ENCODE measurements at regions of chr10 and their contacts with region 1.

Region 1: GRCh38 chr10:24415455-24416125 is 206.7 kb downstream of the KIAA1217 start:
- DNase-seq: no peak
- ATAC-seq: no peak
- H3K4me3 ChIP-seq: no peak overlapping the region
- H3K27ac ChIP-seq: no peak overlapping the region
- H3K4me1 ChIP-seq: no peaks in the 10 kb centered on the region
- H3K27me3 ChIP-seq: no peaks in the 10 kb centered on the region
- CTCF ChIP-seq: no peak
- EP300 ChIP-seq: no peak
- POLR2A ChIP-seq: no peak
- RAD21 ChIP-seq: no peak

Region 2: GRCh38 chr10:24331457-24331856 is 84.1 kb before region 1 on chr10:
- CTCF ChIA-PET with region 1: no interaction called
- POLR2A ChIA-PET with region 1: interaction called, 10 read pairs
- RAD21 ChIA-PET with region 1: no interaction called
- SMC1A ChIA-PET with region 1: no interaction called
- in situ Hi-C with region 1: no loop called
- intact Hi-C with region 1: no loop called
- DNase-seq: no peak
- ATAC-seq: no peak
- H3K4me3 ChIP-seq: no peak overlapping the region
- H3K27ac ChIP-seq: no peak overlapping the region
- H3K4me1 ChIP-seq: no peaks in the 10 kb centered on the region
- H3K27me3 ChIP-seq: no peaks in the 10 kb centered on the region
- CTCF ChIP-seq: no peak
- EP300 ChIP-seq: no peak
- POLR2A ChIP-seq: no peak
- RAD21 ChIP-seq: no peak

Region 3: DNA sequence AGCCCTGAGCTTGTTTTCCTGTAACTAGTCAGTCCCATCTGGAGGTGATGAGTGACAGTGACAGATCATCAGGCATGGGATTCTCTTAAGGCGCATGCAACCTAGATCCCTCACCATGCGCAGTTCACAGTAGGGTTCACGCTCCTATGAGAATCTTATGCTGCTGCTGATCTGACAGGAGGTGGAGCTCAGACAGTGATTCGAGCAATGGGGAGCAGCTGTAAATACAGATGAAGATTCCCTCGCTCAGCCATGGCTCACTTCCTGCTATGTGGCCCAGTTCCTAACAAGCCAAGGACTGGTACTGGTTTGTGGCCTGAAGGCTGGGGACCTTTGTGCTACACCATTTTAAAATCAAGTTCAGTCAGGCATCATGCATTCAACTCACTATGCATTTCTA is 15.0 kb after region 1 on chr10:
- CTCF ChIA-PET with region 1: interaction called, 8 read pairs
- POLR2A ChIA-PET with region 1: interaction called, 5 read pairs
- RAD21 ChIA-PET with region 1: interaction called, 4 read pairs
- SMC1A ChIA-PET with region 1: interaction called, 10 read pairs
- in situ Hi-C with region 1: no loop called
- intact Hi-C with region 1: no loop called
- DNase-seq: no peak
- ATAC-seq: no peak
- H3K4me3 ChIP-seq: no peak overlapping the region
- H3K27ac ChIP-seq: no peak overlapping the region
- H3K4me1 ChIP-seq: no peaks in the 10 kb centered on the region
- H3K27me3 ChIP-seq: no peaks in the 10 kb centered on the region
- CTCF ChIP-seq: no peak
- EP300 ChIP-seq: no peak
- POLR2A ChIP-seq: no peak
- RAD21 ChIP-seq: no peak

Region 4: DNA sequence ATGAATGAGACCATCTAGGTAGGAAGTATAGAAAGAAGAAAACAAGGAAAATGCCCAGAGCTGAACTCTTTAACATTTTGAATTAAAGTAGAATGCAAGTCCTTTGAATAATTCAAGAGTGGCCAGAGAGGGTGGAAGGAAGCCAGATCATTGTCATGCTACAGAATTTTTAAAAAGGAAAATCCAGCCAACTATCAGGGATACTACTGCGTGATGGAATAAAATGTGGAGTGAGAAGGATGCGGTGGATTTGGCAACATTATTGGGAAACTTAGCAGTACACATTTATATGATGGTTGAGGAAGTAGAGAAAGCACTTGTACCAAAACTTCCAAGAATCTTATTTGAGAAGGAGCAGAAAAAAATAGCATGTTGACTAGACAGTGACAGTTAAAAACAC is 1020.8 kb after region 1 on chr10:
- CTCF ChIA-PET with region 1: no interaction called
- POLR2A ChIA-PET with region 1: no interaction called
- RAD21 ChIA-PET with region 1: no interaction called
- SMC1A ChIA-PET with region 1: no interaction called
- in situ Hi-C with region 1: no loop called
- intact Hi-C with region 1: no loop called
- DNase-seq: no peak
- ATAC-seq: no peak
- H3K4me3 ChIP-seq: no peak overlapping the region
- H3K27ac ChIP-seq: no peak overlapping the region
- H3K4me1 ChIP-seq: no peaks in the 10 kb centered on the region
- H3K27me3 ChIP-seq: no peaks in the 10 kb centered on the region
- CTCF ChIP-seq: no peak
- EP300 ChIP-seq: no peak
- POLR2A ChIP-seq: no peak
- RAD21 ChIP-seq: no peak

Measured in GM12878 (cell line).